Left lung (tissue), 14 donors: ENCODE measurements at regions of chr2 and their contacts with region 1.

Region 1: GRCh38 chr2:26846328-26847306 is 1.3 kb upstream of the DPYSL5 start:
- DNase-seq: peak in 3 of 4 donors; percentile 55 to 88 (median 70)
- ATAC-seq: peak; percentile 93
- H3K4me3 ChIP-seq: no peak overlapping the region
- H3K27ac ChIP-seq: no peak overlapping the region
- H3K4me1 ChIP-seq: peaks cover 7 to 37% of the 10 kb centered on the region in 2 donors
- H3K27me3 ChIP-seq: peaks cover 65 to 98% of the 10 kb centered on the region in 2 donors
- CTCF ChIP-seq: peak; percentile 39 to 68

Region 2: GRCh38 chr2:26938399-26939118 is 91.9 kb after region 1 on chr2:
- intact Hi-C with region 1: loop called in 1 of 2 experiments (anchors 5 kb)
- DNase-seq: no peak
- ATAC-seq: no peak
- H3K4me3 ChIP-seq: no peak overlapping the region
- H3K27ac ChIP-seq: no peak overlapping the region
- H3K4me1 ChIP-seq: no peaks in the 10 kb centered on the region
- H3K27me3 ChIP-seq: peaks cover 0 to 23% of the 10 kb centered on the region in 2 donors
- CTCF ChIP-seq: no peak

Region 3: GRCh38 chr2:26982102-26982742 is 135.6 kb after region 1 on chr2:
- intact Hi-C with region 1: no loop called
- DNase-seq: peak in 2 of 4 donors; percentile 60 to 63
- ATAC-seq: peak; percentile 95
- H3K4me3 ChIP-seq: no peak overlapping the region
- H3K27ac ChIP-seq: no peak overlapping the region
- H3K4me1 ChIP-seq: peaks cover 4 to 11% of the 10 kb centered on the region in 2 donors
- H3K27me3 ChIP-seq: no peaks in the 10 kb centered on the region
- CTCF ChIP-seq: peak; percentile 25 to 26

Region 4: DNA sequence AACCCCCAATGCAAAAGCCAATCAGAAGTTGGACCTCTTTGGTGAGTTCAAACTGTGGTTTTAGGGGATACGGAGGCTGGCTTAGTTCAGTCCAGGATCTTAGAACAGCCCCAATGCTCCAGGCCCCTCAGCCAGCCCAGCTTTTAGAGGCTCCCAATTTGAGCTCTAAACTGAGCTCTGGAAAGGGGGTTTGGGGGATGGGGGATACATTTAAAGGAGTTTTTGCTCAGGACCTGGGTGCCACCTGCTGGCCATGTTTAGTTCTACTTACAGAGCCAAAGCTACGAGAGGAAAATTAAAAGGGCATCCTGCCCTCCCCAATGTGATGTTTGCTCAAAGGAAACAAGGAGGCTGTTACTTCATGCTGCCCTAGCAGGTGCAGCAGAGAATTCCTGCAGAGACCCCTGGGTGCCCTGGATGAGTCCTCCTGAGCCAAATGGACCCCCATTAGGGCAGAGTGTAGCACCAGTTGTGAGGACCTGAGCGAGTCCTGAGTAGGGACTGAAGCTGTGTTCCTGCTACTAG is 170.2 kb after region 1 on chr2:
- intact Hi-C with region 1: loop called in 1 of 2 experiments (anchors 10 kb)
- DNase-seq: peak in 1 of 4 donors; percentile 52
- ATAC-seq: peak; percentile 69
- H3K4me3 ChIP-seq: no peak overlapping the region
- H3K27ac ChIP-seq: peak overlapping the region in 1 of 2 donors; percentile 19
- H3K4me1 ChIP-seq: peaks cover 7 to 12% of the 10 kb centered on the region in 2 donors
- H3K27me3 ChIP-seq: no peaks in the 10 kb centered on the region
- CTCF ChIP-seq: peak; percentile 59 to 61